Calu3 (cell line): ENCODE measurements at regions of chr2 and their contacts with region 1.

Region 1: DNA sequence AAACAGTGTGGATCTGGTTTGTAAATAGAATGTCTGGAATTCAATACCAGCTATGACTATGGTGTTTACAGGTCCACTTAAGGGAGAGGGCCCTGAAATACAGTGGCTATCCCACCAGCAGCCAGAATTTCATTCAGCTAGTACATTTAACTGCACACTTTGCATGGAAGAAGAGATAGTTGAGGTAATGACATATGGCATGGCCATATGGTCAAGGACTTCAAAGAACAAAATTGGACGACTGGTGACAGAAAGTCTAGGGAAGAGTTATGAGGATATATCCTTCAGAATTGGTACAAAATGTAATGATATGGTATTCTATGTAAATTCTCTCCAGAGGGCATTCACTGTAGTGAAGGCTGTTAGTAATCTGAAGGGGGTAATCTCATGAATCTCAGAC is 105.0 kb downstream of the IKZF2 start:
- DNase-seq: no peak
- H3K4me3 Mint-ChIP-seq: no peak overlapping the region
- H3K27ac Mint-ChIP-seq: no peak overlapping the region
- H3K4me1 Mint-ChIP-seq: no peaks in the 10 kb centered on the region
- H3K27me3 Mint-ChIP-seq: no peaks in the 10 kb centered on the region
- CTCF ChIP-seq: no peak

Region 2: GRCh38 chr2:212919250-212919649 is 127.2 kb before region 1 on chr2:
- CTCF ChIA-PET with region 1: no interaction called
- intact Hi-C with region 1: no loop called
- DNase-seq: peak; percentile 55
- H3K4me3 Mint-ChIP-seq: no peak overlapping the region
- H3K27ac Mint-ChIP-seq: peak overlapping the region; percentile 19
- H3K4me1 Mint-ChIP-seq: peaks cover 55% of the 10 kb centered on the region
- H3K27me3 Mint-ChIP-seq: no peaks in the 10 kb centered on the region
- CTCF ChIP-seq: no peak

Region 3: GRCh38 chr2:213084261-213084660 is 37.8 kb after region 1 on chr2:
- CTCF ChIA-PET with region 1: no interaction called
- intact Hi-C with region 1: loop called (anchors 1 kb)
- DNase-seq: no peak
- H3K4me3 Mint-ChIP-seq: no peak overlapping the region
- H3K27ac Mint-ChIP-seq: no peak overlapping the region
- H3K4me1 Mint-ChIP-seq: peaks cover 11% of the 10 kb centered on the region
- H3K27me3 Mint-ChIP-seq: no peaks in the 10 kb centered on the region
- CTCF ChIP-seq: no peak

Region 4: DNA sequence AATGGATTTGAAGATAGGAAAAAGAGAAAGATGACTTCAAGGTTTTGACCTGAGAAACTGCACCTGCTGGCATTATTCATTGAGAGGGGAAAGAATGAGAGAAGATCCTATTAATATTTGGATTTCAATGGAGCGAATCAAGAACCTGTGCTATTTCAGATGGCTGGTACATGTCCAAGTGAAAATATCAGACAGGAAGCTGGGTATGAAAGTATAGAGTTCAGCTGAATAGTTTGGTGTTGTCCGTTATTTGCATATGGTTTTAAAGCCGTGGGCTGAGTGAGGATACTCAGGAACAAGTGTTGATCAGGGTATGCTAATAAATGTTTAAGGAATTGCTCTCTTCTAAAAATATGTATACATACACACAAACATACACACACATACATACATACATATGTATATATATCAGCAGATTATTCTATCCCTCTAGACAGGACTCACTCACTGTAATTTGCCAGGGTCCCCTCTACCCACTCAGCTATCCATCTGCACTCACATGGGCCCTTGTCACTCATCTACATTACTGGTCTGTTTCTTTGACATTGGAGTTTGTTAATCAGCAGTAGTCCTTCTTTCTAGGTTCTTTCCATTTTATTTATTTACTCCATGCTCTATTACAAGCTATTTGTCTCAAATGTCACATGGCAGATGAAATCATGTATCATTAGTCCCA is 138.9 kb after region 1 on chr2:
- CTCF ChIA-PET with region 1: no interaction called
- intact Hi-C with region 1: no loop called
- DNase-seq: no peak
- H3K4me3 Mint-ChIP-seq: no peak overlapping the region
- H3K27ac Mint-ChIP-seq: no peak overlapping the region
- H3K4me1 Mint-ChIP-seq: peaks cover 38% of the 10 kb centered on the region
- H3K27me3 Mint-ChIP-seq: no peaks in the 10 kb centered on the region
- CTCF ChIP-seq: no peak